ENCODE measurements at regions of chr3 and their contacts with region 1.

Region 1: GRCh38 chr3:33023172-33024136 is 72.0 kb downstream of the CCR4 start:
- DNase-seq: no peak
- H3K4me3 Mint-ChIP-seq: peak overlapping the region; percentile 28
- H3K27ac Mint-ChIP-seq: peak overlapping the region; percentile 94
- H3K4me1 Mint-ChIP-seq: peaks cover 56% of the 10 kb centered on the region
- H3K27me3 Mint-ChIP-seq: peaks cover 1% of the 10 kb centered on the region

Region 2: DNA sequence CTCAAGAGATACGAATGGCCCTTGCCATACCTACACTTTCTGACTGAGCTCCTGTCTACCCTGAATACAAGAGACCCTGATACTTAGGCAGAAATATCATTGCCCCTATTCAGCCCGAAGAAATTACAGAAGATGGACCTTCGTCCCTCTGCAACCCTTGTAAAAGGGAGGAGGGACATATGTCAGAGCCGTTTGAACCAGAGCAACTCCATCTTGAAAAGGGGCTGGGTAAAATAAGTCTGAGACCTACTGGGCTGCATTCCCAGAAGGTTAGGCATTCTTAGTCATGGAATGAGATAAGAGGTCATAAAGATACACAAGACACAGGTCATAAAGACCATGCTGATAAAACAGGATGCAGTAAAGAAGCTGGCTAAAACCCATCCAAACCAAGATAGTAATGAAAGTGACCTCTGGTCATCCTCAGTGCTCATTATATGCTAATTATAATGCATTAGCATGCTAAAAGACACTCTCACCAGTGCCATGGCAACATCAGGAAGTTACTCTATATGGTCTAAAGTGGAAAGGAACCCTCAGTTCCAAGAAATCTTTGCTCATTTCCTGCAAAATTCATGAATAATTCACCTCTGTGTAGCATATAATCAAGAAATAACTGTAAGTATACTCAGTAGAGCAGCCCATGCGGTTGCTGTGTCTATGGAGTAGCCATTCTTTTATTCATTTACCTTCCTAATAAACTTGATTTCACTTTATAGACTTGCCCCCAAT is 966.7 kb before region 1 on chr3:
- intact Hi-C with region 1: no loop called
- DNase-seq: no peak
- H3K4me3 Mint-ChIP-seq: no peak overlapping the region
- H3K27ac Mint-ChIP-seq: no peak overlapping the region
- H3K4me1 Mint-ChIP-seq: peaks cover 7% of the 10 kb centered on the region
- H3K27me3 Mint-ChIP-seq: peaks cover 5% of the 10 kb centered on the region

Region 3: GRCh38 chr3:32947789-32948238 is 75.6 kb before region 1 on chr3:
- intact Hi-C with region 1: loop called (anchors 1 kb)
- DNase-seq: peak; percentile 83
- H3K4me3 Mint-ChIP-seq: no peak overlapping the region
- H3K27ac Mint-ChIP-seq: peak overlapping the region; percentile 44
- H3K4me1 Mint-ChIP-seq: peaks cover 48% of the 10 kb centered on the region
- H3K27me3 Mint-ChIP-seq: peaks cover 2% of the 10 kb centered on the region

Region 4: DNA sequence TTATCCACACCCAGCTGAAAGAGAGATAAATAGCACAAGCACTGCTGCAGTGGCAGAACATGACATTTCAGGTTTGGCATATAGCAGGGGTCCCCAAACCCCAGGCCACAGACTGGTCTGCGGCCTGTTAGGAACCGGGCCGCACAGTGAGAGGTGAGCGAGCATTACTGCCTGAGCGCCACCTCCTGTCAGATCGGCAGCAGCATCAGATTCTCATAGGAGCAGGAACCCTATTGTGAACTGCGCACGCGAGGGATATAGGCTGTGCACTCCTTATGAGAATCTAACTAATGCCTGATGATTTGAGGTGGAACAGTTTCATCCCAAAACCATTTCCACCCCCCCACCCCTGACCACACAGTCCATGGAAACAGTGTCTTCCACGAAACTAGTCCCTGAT is 17.4 kb before region 1 on chr3:
- intact Hi-C with region 1: loop called (anchors 1 kb)
- DNase-seq: no peak
- H3K4me3 Mint-ChIP-seq: no peak overlapping the region
- H3K27ac Mint-ChIP-seq: peak overlapping the region; percentile 76
- H3K4me1 Mint-ChIP-seq: peaks cover 49% of the 10 kb centered on the region
- H3K27me3 Mint-ChIP-seq: no peaks in the 10 kb centered on the region

Region 5: GRCh38 chr3:33074217-33075067 is 51.0 kb after region 1 on chr3:
- intact Hi-C with region 1: loop called (anchors 1 kb)
- DNase-seq: peak; percentile 43
- H3K4me3 Mint-ChIP-seq: no peak overlapping the region
- H3K27ac Mint-ChIP-seq: no peak overlapping the region
- H3K4me1 Mint-ChIP-seq: peaks cover 42% of the 10 kb centered on the region
- H3K27me3 Mint-ChIP-seq: no peaks in the 10 kb centered on the region

Region 6: GRCh38 chr3:33113772-33114621 is 90.5 kb after region 1 on chr3 and contains the start of gene CRTAP:
- intact Hi-C with region 1: loop called (anchors 1 kb)
- DNase-seq: peak; percentile 78
- H3K4me3 Mint-ChIP-seq: peak within 1 kb of the TSS; percentile 87
- H3K27ac Mint-ChIP-seq: peak within 1 kb of the TSS; percentile 74
- H3K4me1 Mint-ChIP-seq: peaks cover 26% of the 10 kb centered on the region
- H3K27me3 Mint-ChIP-seq: no peaks in the 10 kb centered on the region
- total RNA-seq, gene CRTAP: 30.3 and 33.2 TPM in 2 replicates